Activated B cell treated with CpG ODN at 0.5 μM for 24 hours (primary cell): ENCODE measurements at regions of chr2 and their contacts with region 1.

Region 1: DNA sequence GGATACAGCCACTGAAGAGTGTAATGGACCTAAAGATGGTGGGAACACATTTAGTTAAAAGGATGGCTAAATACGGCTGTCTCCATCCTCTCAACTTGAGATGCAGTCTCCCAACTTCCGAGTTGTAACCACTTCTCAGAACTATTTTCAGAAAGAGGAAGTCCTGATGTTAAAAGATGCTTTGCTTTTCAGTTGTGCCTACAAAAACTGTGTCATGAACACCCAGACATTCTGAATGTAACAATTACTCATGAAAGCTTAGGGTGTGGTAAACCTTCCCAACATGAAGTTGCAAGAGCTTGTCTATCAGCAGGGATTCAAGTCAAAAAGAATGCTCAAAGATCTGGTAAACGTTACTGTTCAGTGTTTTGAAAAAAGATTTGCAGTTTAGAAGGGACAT is 147.9 kb downstream of the DOCK10 start:
- DNase-seq: no peak
- ATAC-seq: peak; percentile 70
- H3K4me3 Mint-ChIP-seq: peak overlapping the region; percentile 74
- H3K27ac Mint-ChIP-seq: peak overlapping the region; percentile 95
- H3K4me1 Mint-ChIP-seq: peaks cover 62% of the 10 kb centered on the region
- H3K27me3 Mint-ChIP-seq: no peaks in the 10 kb centered on the region
- CTCF ChIP-seq: no peak

Region 2: GRCh38 chr2:224098481-224099230 is 795.7 kb before region 1 on chr2:
- CTCF ChIA-PET with region 1: no interaction called
- POLR2A ChIA-PET with region 1: no interaction called
- intact Hi-C with region 1: no loop called
- DNase-seq: no peak
- ATAC-seq: no peak
- H3K4me3 Mint-ChIP-seq: no peak overlapping the region
- H3K27ac Mint-ChIP-seq: no peak overlapping the region
- H3K4me1 Mint-ChIP-seq: peaks cover 4% of the 10 kb centered on the region
- H3K27me3 Mint-ChIP-seq: peaks cover 8% of the 10 kb centered on the region
- CTCF ChIP-seq: no peak

Region 3: GRCh38 chr2:224875841-224876240 is 18.5 kb before region 1 on chr2:
- CTCF ChIA-PET with region 1: no interaction called
- POLR2A ChIA-PET with region 1: interaction called, 4 read pairs
- intact Hi-C with region 1: loop called (anchors 2 kb)
- DNase-seq: no peak
- ATAC-seq: peak; percentile 54
- H3K4me3 Mint-ChIP-seq: peak overlapping the region; percentile 39
- H3K27ac Mint-ChIP-seq: peak overlapping the region; percentile 72
- H3K4me1 Mint-ChIP-seq: peaks cover 31% of the 10 kb centered on the region
- H3K27me3 Mint-ChIP-seq: no peaks in the 10 kb centered on the region
- CTCF ChIP-seq: no peak

Region 4: DNA sequence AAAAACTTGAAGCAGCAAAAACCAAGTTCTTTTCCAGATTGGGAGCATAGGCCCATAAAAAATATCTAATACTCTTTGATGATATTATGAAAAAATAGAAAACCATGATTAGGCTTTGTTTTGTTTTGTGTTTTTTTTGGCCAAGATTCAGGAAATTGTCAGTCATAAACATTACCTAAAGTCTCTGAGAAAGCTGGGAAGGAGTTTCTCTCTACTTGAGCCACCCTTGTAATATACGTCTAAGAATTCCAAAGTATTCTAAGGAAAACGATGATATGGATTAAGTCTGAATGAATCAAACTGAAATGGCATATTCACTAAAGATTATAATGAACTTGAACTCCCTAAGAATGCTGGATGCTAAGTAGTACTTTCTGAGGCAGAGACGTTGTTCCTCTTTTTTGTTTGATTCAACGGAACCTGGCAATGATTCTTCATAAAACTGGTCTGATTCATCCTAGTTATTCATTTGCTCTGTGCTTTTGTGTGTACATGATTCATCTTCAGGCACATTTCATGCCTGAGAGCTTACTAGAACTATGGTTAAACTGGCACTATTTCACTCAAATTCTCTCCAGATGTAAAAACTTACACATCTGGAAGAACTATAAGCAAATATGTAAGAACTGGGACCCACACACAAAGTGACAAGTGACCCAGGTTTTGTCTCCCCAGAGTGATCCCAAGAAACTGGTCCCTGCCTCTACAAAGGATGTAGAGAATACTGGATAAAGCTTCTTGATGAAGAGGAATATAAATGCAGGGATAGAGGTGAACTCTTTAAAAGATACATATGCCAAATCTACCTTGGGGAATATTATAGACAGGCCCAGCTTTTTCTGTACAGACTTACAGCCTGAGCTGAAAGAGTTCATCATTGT is 11.8 kb before region 1 on chr2:
- CTCF ChIA-PET with region 1: no interaction called
- POLR2A ChIA-PET with region 1: interaction called, 3 read pairs
- intact Hi-C with region 1: loop called (anchors 1 kb)
- DNase-seq: no peak
- ATAC-seq: peak; percentile 77
- H3K4me3 Mint-ChIP-seq: peak overlapping the region; percentile 13
- H3K27ac Mint-ChIP-seq: peak overlapping the region; percentile 55
- H3K4me1 Mint-ChIP-seq: peaks cover 32% of the 10 kb centered on the region
- H3K27me3 Mint-ChIP-seq: no peaks in the 10 kb centered on the region
- CTCF ChIP-seq: no peak

Region 5: DNA sequence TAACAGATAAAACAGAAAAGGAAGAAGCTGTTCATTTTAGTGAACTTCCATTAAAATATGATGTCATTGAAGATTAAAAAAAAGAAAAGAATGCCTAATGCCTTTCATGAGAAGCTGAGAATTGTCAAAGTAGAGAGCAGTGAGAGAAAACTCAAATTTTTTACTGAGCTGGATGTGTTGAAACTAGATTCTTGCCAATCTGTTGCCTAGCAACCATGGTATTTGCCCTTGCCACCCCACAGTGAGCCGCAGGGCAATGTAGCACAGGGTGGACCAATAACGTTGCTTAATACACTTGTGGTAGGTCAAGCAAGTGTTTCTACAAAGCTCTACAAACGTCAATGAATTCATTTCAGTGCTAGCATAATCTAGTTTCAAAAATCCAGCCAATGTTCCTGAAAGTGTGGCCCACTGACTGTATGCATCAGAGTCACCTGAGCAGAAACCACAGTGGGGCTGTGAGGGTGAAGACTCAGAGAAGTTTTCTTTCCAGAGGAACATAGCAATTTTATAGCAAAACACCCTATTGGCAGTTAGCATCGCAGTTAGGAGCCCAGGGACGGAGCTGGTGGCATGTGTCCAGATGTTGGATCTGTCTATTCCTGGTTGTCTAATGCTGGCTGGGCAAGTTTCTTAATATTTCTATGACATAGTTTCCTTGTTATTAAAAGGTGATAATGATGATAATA is 15.7 kb after region 1 on chr2:
- CTCF ChIA-PET with region 1: no interaction called
- POLR2A ChIA-PET with region 1: no interaction called
- intact Hi-C with region 1: loop called (anchors 1 kb)
- DNase-seq: no peak
- ATAC-seq: peak; percentile 85
- H3K4me3 Mint-ChIP-seq: peak overlapping the region; percentile 30
- H3K27ac Mint-ChIP-seq: peak overlapping the region; percentile 82
- H3K4me1 Mint-ChIP-seq: peaks cover 46% of the 10 kb centered on the region
- H3K27me3 Mint-ChIP-seq: no peaks in the 10 kb centered on the region
- CTCF ChIP-seq: no peak

Region 6: GRCh38 chr2:224927646-224928173 is 33.4 kb after region 1 on chr2:
- CTCF ChIA-PET with region 1: no interaction called
- POLR2A ChIA-PET with region 1: interaction called, 3 read pairs
- intact Hi-C with region 1: loop called (anchors 1 kb)
- DNase-seq: no peak
- ATAC-seq: no peak
- H3K4me3 Mint-ChIP-seq: peak overlapping the region; percentile 11
- H3K27ac Mint-ChIP-seq: peak overlapping the region; percentile 78
- H3K4me1 Mint-ChIP-seq: peaks cover 98% of the 10 kb centered on the region
- H3K27me3 Mint-ChIP-seq: no peaks in the 10 kb centered on the region
- CTCF ChIP-seq: no peak

Region 7: GRCh38 chr2:224952936-224953657 is 58.7 kb after region 1 on chr2:
- CTCF ChIA-PET with region 1: no interaction called
- POLR2A ChIA-PET with region 1: interaction called, 4 read pairs
- intact Hi-C with region 1: loop called (anchors 1 kb)
- DNase-seq: no peak
- ATAC-seq: peak; percentile 83
- H3K4me3 Mint-ChIP-seq: peak overlapping the region; percentile 42
- H3K27ac Mint-ChIP-seq: peak overlapping the region; percentile 79
- H3K4me1 Mint-ChIP-seq: peaks cover 92% of the 10 kb centered on the region
- H3K27me3 Mint-ChIP-seq: no peaks in the 10 kb centered on the region
- CTCF ChIP-seq: no peak